ENCODE measurements at regions of chr11 and their contacts with region 1.

Region 1: DNA sequence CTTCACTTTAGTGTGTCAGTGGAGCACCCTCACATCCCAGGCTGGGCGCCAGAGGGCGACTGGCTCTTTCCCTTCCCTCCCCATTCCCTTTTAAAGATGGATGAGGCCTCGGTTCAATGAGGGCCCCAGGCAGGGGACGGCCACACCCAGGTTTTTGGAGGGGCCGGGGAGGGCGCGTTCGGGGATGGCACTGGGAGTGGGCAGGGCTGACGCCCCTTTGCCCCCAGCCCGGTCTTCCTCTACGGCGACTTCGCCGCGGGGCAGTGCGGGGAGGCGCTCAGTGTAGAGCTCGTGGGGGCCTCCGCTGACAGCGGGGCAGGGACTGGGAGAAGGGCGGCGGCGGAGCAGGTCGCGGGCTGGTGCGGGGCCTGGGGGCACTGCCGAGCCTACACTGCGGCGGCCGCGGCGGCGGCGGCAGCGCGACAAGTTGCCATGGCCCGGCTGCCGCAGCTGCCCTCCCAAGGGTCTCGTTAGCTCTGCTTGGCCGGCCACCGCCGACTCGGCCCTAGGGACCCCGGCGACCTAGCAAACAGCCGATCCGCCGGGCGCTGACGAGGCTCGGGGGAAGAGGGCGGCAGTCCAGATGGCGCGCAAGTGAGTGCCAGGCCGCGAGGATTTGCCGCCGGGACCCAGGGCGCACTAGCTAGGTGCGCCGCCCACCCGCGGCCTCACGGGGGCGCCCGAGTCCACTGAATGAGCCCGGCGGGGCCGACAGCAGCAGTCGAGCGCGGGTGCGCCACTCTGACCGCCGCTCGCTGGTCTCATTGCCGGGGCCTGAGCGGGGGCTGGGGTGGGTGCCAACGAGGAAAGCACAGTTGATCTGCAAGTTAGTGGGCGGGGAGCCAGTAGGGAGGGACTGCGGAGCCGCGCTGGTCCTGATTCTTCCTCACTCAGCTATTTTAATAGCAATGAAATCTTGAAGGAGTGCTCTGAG is 92.7 kb downstream of the RRM1 start:
- DNase-seq: peak; percentile 96
- ATAC-seq: peak; percentile 88 to 96

Region 2: GRCh38 chr11:3359092-3359824 is 828.1 kb before region 1 on chr11:
- intact Hi-C with region 1: no loop called
- DNase-seq: no peak
- ATAC-seq: no peak

Region 3: GRCh38 chr11:4134844-4135243 is 52.5 kb before region 1 on chr11:
- intact Hi-C with region 1: no loop called
- DNase-seq: no peak
- ATAC-seq: no peak

Region 4: DNA sequence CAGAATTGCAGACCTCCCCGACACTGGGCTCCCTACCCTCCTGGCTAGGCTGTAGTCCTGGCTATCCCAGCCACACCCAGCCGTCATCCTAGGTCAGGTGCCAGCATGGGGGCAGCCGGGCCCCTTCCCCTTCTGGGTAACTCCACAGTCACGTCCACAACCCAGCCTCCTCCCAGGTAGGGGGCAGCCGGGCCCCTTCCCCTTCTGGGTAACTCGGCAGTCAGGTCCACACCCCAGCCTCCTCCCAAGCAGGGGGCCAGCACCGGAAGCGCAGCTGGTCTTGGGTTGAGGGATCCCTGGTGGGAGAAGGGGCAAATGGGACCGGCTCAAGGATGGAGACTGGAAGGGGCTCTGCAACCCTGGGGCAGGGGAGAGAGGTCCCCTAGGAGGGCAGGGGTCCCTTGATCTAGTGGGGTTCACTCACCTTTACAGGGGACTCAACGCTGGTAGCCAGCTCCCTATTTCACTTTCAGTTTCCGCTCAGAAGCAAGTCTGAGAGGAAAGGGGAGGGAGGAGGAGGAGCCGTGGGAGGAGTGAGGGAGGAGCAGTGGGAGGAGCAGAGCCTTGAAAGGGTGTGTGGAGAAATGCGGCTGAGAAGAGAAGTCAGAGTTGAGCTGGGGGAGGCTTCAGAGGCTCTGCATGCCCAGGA is 206.0 kb after region 1 on chr11 and contains the start of gene TRIM21:
- intact Hi-C with region 1: loop called in 1 of 2 experiments (anchors 5 kb)
- DNase-seq: peak; percentile 86
- ATAC-seq: peak; percentile 100
- total RNA-seq, gene TRIM21: 9.7 to 11.0 TPM

Region 5: DNA sequence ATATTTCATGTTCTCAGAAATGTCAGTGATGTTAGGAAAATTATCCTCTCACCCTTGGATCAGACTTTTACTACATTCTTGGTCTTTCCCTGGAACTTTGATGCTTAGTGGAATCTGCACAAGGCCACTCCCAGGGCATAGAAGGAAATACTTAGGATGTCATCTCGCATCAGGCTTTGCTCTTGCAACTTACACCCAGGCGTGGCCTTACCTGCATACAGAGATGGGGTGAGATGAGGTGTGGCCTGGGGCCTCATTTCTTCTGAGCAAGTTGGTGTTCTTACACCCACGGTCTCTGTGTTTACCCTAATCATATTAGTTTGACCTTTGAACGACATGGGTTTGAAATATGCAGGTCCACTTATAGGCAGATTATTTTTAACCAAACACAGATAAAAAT is 242.7 kb after region 1 on chr11:
- intact Hi-C with region 1: no loop called
- DNase-seq: no peak
- ATAC-seq: no peak

Region 6: GRCh38 chr11:4493480-4493818 is 306.1 kb after region 1 on chr11:
- intact Hi-C with region 1: loop called (anchors 1 to 2 kb)
- DNase-seq: no peak
- ATAC-seq: no peak

Region 7: GRCh38 chr11:4539603-4540219 is 352.4 kb after region 1 on chr11:
- intact Hi-C with region 1: loop called (anchors 1 to 5 kb)
- DNase-seq: peak; percentile 36
- ATAC-seq: peak; percentile 78 to 79

Region 8: DNA sequence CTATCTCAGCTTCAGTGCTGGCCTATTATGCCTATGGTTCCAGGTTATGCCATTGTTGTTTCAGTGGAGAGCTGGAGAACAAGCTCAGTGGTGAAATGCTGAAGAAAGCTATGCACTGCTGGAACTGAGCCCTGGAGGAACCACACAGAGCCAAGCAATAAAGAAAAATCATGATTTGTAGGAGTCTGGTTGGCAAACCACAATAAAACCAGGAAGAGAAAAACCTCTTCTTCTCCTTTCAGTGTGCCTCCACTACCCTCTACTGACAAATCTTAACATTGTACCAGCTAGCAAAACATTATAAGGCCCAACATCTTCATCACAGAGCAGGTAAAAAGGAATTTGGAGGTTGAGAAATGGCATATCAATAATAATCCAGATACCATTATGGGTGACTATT is 639.1 kb after region 1 on chr11:
- intact Hi-C with region 1: loop called in 1 of 2 experiments (anchors 10 kb)
- DNase-seq: no peak
- ATAC-seq: peak; percentile 38 to 70